ENCODE measurements at regions of chr1 and their contacts with region 1.

Region 1: GRCh38 chr1:157691285-157691920 is 9.2 kb downstream of the FCRL3 start:
- DNase-seq: peak; percentile 28
- H3K4me3 ChIP-seq: no peak overlapping the region
- H3K27ac ChIP-seq: no peak overlapping the region
- H3K4me1 ChIP-seq: no peaks in the 10 kb centered on the region
- H3K27me3 ChIP-seq: no peaks in the 10 kb centered on the region
- CTCF ChIP-seq: peak in 1 of 2 donors; percentile 47
- POLR2A ChIP-seq: no peak

Region 2: GRCh38 chr1:157363660-157364140 is 327.7 kb before region 1 on chr1:
- CTCF ChIA-PET with region 1: interaction called, 7 read pairs
- POLR2A ChIA-PET with region 1: no interaction called
- dilution Hi-C with region 1: no loop called
- intact Hi-C with region 1: loop called (anchors 5 kb)
- DNase-seq: peak; percentile 45
- H3K4me3 ChIP-seq: no peak overlapping the region
- H3K27ac ChIP-seq: no peak overlapping the region
- H3K4me1 ChIP-seq: no peaks in the 10 kb centered on the region
- H3K27me3 ChIP-seq: peaks cover 0 to 2% of the 10 kb centered on the region in 2 experiments
- CTCF ChIP-seq: peak; percentile 46 to 79
- POLR2A ChIP-seq: no peak